Activated CD8-positive, alpha-beta memory T cell treated with anti-CD3 and anti-CD28 coated beads, Interleukin-2, amount 10 ng/mL, durations not matched to agents 7 days and 5 days (primary cell): ENCODE measurements at regions of chr3 and their contacts with region 1.

Region 1: GRCh38 chr3:43162230-43163084 is 56.6 kb upstream of the POMGNT2 start:
- DNase-seq: peak; percentile 78
- ATAC-seq: peak; percentile 87
- H3K4me3 Mint-ChIP-seq: peak overlapping the region; percentile 62
- H3K27ac Mint-ChIP-seq: peak overlapping the region; percentile 98
- H3K4me1 Mint-ChIP-seq: peaks cover 20% of the 10 kb centered on the region
- H3K27me3 Mint-ChIP-seq: no peaks in the 10 kb centered on the region

Region 2: DNA sequence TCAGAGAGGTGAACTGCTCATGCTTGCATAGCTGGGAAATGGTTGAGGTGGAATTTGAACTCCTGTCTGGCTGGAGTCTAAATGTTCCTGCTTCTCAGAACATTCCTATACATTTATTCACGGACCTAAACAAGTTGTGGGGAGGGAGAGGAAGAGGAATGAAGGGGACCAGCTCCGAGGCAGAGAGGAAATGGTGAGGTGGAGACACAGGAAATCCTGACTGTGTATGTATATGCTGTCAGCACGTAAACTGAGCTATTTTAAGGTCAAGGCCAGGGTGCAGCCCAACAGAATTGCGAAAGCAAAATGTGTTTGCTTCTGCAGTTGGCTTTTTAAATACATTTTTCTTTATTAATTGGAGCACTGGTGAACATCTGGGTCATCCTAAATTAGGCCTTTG is 17.6 kb after region 1 on chr3:
- CTCF ChIA-PET with region 1: interaction called, 50 read pairs
- DNase-seq: peak; percentile 75
- ATAC-seq: peak; percentile 90
- H3K4me3 Mint-ChIP-seq: peak overlapping the region; percentile 43
- H3K27ac Mint-ChIP-seq: peak overlapping the region; percentile 90
- H3K4me1 Mint-ChIP-seq: peaks cover 41% of the 10 kb centered on the region
- H3K27me3 Mint-ChIP-seq: no peaks in the 10 kb centered on the region

Region 3: GRCh38 chr3:43286115-43286840 is 123.8 kb after region 1 on chr3 and contains the start of gene SNRK:
- CTCF ChIA-PET with region 1: interaction called, 23 read pairs
- DNase-seq: peak; percentile 91
- ATAC-seq: peak; percentile 83
- H3K4me3 Mint-ChIP-seq: peak within 1 kb of the TSS; percentile 99
- H3K27ac Mint-ChIP-seq: peak within 1 kb of the TSS; percentile 97
- H3K4me1 Mint-ChIP-seq: peaks cover 35% of the 10 kb centered on the region
- H3K27me3 Mint-ChIP-seq: peaks cover 2% of the 10 kb centered on the region
- total RNA-seq, gene SNRK: 47.7 to 57.2 TPM

Region 4: GRCh38 chr3:43345877-43346276 is 183.4 kb after region 1 on chr3:
- CTCF ChIA-PET with region 1: interaction called, 22 read pairs
- DNase-seq: peak; percentile 77
- ATAC-seq: peak; percentile 72
- H3K4me3 Mint-ChIP-seq: no peak overlapping the region
- H3K27ac Mint-ChIP-seq: peak overlapping the region; percentile 98
- H3K4me1 Mint-ChIP-seq: peaks cover 75% of the 10 kb centered on the region
- H3K27me3 Mint-ChIP-seq: no peaks in the 10 kb centered on the region

Region 5: DNA sequence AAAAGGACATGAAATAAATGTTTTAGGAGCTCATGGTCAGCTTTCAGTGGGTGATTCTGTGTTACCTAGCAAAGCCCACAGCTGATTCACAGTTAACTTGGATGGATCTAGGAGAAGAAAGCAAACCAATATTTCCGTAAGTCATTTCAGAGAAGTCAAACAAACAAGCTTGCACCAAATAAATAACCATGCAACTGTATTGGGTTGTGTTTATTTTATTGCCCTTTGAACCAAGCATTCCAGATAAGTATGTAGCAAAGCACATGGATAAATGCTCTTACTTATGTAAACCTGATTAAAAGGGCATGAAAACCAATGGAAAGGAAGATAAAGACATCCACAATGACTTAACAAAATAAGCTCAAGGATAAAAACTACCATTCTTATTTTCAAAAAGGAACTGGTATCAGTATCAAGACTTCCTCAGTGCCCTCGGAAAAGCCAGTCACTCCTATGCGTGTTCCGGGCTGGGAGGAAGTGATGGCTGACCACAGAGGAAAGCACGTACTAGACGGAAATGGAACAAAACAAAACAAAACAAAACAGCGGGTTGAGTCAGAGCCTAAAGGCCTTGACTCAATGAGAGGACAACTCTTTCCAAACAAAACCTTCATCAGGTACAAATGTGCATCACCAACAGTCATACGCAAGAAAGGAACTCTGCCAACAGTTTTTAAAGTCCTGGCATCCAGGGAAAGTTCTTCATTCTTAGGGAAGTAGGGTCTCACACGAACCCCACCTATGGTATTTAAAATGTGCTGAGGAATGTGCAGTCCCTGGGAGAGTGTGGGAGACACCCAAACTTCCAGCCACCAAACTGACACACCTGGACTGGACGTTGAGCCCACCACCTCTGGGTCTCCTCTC is 227.2 kb after region 1 on chr3:
- CTCF ChIA-PET with region 1: interaction called, 10 read pairs
- DNase-seq: peak; percentile 90
- ATAC-seq: peak; percentile 95
- H3K4me3 Mint-ChIP-seq: peak overlapping the region; percentile 37
- H3K27ac Mint-ChIP-seq: peak overlapping the region; percentile 93
- H3K4me1 Mint-ChIP-seq: peaks cover 30% of the 10 kb centered on the region
- H3K27me3 Mint-ChIP-seq: no peaks in the 10 kb centered on the region